ENCODE measurements at regions of chr4 and their contacts with region 1.

Region 1: DNA sequence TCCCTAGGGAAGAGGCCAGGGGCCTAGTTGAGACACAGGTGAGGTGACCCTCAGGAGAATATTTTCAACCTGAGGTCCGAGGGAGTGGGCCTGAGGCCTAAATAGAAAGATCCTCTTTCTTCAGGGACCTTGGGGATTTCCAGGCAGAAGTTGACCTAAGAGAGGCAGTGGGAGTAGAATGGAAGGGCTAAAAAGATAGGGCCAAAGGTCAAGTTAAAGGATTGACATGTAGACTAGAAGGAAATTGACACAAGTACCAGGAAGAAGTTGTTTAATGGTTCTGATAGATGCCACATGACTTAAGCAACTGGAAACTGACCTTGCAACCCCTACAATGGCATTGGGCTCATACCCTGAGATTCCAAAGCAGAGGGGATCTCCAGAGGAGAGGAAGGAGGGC is 76.9 kb downstream of the SHROOM3 start:
- DNase-seq: no peak
- H3K4me3 Mint-ChIP-seq: no peak overlapping the region
- H3K27ac Mint-ChIP-seq: no peak overlapping the region
- H3K4me1 Mint-ChIP-seq: no peaks in the 10 kb centered on the region
- H3K27me3 Mint-ChIP-seq: peaks cover 3% of the 10 kb centered on the region

Region 2: GRCh38 chr4:76748649-76749048 is 236.7 kb after region 1 on chr4:
- intact Hi-C with region 1: loop called (anchors 2 kb)
- DNase-seq: no peak
- H3K4me3 Mint-ChIP-seq: no peak overlapping the region
- H3K27ac Mint-ChIP-seq: no peak overlapping the region
- H3K4me1 Mint-ChIP-seq: no peaks in the 10 kb centered on the region
- H3K27me3 Mint-ChIP-seq: peaks cover 15% of the 10 kb centered on the region

Region 3: DNA sequence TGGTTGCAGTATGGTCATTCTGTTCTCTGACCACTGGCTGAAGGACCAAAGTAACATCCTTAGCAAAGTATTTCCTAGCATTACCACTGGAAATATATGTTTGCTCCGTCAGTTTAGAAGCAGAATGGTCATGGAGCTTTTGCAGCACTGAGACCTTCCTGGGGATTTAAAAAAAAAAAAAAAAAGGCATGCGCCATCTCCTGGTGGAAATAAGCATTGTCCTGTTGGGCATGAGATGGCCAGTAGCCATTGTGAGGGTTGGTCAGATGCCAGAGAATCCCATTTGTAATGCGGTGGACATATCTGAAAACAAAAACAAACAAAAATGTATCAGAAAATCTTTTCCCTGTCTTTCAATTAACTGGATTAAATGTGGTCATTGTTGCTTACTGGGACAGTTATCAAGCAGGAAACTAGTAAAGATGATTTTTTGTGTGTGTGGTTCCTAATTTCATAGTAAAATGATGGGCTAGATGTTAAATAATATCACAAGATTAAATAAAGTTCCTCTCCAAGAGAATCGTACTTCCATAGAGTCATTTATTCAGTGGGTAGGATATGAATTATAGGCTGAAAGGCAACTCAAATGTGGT is 246.4 kb after region 1 on chr4:
- intact Hi-C with region 1: loop called (anchors 1 kb)
- DNase-seq: no peak
- H3K4me3 Mint-ChIP-seq: no peak overlapping the region
- H3K27ac Mint-ChIP-seq: no peak overlapping the region
- H3K4me1 Mint-ChIP-seq: peaks cover 12% of the 10 kb centered on the region
- H3K27me3 Mint-ChIP-seq: peaks cover 3% of the 10 kb centered on the region

Region 4: DNA sequence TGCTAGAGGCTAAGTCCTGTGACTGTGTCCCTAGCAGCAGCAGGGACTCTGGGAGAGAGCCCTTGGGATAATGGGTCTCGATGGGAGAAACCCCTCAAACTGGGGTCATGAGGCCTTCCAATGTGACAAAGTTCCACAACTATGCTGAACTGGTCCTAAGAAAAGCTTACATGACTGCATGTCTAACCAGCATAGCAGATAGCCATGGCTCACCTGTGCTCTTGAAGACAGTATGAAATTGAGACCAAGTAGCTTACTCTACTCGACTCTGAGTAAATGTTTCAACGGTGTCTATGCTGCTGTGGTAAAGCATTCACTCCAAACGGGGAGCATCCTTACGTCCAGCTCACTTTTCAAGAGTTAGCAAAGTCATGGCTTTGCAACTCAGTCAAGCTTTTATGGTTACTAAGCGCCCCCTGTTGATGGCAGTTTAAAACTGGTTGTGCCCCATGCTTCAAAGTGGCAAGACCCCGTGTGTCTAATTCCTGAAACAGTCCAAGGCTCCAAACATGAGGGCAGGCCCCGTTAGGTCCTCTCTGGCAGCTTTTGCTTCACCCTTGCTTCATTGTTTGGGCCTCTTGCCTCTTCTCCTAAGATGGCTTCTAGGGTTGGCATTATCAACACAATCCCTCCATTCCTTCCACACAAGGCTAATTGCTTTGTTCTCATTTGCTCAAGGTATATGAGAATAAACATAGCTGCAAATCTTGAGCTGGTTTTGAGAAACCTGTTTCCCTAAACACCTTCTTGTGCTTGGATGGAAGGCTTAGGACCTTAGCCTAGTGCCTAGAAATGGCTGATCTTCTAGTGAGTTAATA is 691.6 kb after region 1 on chr4:
- intact Hi-C with region 1: loop called (anchors 1 kb)
- DNase-seq: peak; percentile 47
- H3K4me3 Mint-ChIP-seq: no peak overlapping the region
- H3K27ac Mint-ChIP-seq: no peak overlapping the region
- H3K4me1 Mint-ChIP-seq: peaks cover 13% of the 10 kb centered on the region
- H3K27me3 Mint-ChIP-seq: peaks cover 15% of the 10 kb centered on the region

Measured in activated T-helper 1 cell treated with anti-CD3 and anti-CD28 coated beads, Interleukin-12 subunit alpha, Interleukin-12 subunit beta, Interleukin-2, Interleukin-4 antibody, amounts not matched to agents 30 ng/mL and 10 ng/mL and 1 ng/mL, durations not matched to agents 14 hours and 24 hours and 36 hours (primary cell).